ENCODE measurements at regions of chr5 and their contacts with region 1.

Region 1: GRCh38 chr5:64612344-64612961 is 77.8 kb upstream of the SHISAL2B start:
- DNase-seq: peak; percentile 30
- H3K4me3 Mint-ChIP-seq: no peak overlapping the region
- H3K27ac Mint-ChIP-seq: no peak overlapping the region
- H3K4me1 Mint-ChIP-seq: no peaks in the 10 kb centered on the region
- H3K27me3 Mint-ChIP-seq: peaks cover 21% of the 10 kb centered on the region

Region 2: DNA sequence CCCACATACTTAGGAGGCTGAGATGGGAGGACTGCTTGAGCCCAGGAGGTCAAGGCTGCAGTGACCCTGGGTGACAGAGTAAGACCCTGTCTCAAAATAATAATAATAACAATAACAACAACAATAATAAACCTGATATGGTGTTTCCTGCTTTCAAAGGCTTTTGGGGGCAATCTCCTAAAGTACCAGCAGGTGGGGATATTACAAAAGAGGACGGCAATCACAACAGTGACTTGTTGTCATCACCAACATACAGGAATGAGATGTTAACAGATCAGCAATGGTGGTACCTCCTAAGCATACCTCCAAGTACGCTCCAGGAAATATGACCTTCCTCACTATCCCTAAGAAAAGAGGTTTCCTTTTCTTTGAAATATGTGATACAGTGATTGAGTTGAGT is 537.9 kb before region 1 on chr5:
- CTCF ChIA-PET with region 1: interaction called, 4 read pairs
- intact Hi-C with region 1: loop called (anchors 10 kb)
- DNase-seq: peak; percentile 5
- H3K4me3 Mint-ChIP-seq: no peak overlapping the region
- H3K27ac Mint-ChIP-seq: no peak overlapping the region
- H3K4me1 Mint-ChIP-seq: no peaks in the 10 kb centered on the region
- H3K27me3 Mint-ChIP-seq: no peaks in the 10 kb centered on the region

Region 3: DNA sequence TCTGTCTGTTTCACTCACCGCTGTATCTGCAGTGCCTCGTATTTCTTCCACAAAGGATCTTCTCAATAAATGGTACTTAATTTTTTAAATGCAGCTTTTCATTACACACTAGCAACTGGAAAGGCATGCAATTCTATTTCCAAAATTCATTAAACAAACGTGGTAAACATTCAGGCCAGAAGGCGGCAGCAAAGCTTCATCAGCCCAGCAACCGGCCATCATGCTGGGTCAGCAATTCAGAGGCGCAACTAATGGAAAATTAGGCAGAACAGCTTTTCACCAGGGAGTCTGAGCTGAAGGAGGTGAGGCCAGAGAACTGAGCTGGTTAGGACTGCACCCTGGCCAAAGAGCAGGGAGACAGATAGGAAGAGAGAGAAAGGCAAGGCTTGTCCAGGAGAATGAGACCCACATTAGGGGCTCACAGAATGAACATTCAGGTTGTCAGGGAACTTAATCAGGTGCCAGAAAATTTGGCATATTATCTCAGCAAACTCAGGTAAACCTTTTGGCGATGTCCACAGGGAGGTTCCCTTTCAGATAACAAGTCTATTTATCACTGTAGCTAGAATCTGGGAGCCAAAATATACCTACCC is 464.5 kb before region 1 on chr5:
- CTCF ChIA-PET with region 1: interaction called, 4 read pairs
- intact Hi-C with region 1: loop called (anchors 2 kb)
- DNase-seq: peak; percentile 14
- H3K4me3 Mint-ChIP-seq: no peak overlapping the region
- H3K27ac Mint-ChIP-seq: no peak overlapping the region
- H3K4me1 Mint-ChIP-seq: no peaks in the 10 kb centered on the region
- H3K27me3 Mint-ChIP-seq: no peaks in the 10 kb centered on the region

Region 4: DNA sequence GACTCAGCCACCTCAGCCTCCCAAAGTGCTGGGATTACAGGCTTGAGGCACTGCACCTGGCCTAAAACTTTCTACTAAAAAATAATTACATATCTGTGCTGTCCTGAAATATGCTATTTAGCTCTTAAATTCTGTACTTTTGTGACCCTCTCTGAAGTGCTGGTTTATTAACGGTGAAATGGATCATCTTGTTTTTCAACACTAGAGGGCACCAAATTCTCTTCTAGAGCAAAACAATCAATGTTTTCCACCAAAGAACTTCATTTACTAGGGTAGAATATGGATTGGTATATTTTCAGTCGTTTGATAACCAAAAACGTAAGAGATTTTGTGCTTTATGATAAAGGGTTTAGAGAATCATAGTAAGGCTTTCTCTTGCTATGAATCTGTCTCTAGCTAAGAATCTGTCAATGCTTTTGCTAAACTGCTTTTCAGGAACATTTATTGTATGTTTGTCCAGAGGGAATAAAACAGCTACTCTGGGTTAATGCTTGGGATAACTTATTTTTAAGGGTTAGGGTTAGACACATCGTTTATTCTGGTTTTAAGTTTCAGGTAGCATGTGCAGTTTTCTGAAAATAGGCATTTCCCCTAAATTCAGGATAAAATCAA is 383.2 kb before region 1 on chr5:
- CTCF ChIA-PET with region 1: interaction called, 16 read pairs
- intact Hi-C with region 1: loop called (anchors 1 kb)
- DNase-seq: no peak
- H3K4me3 Mint-ChIP-seq: no peak overlapping the region
- H3K27ac Mint-ChIP-seq: no peak overlapping the region
- H3K4me1 Mint-ChIP-seq: no peaks in the 10 kb centered on the region
- H3K27me3 Mint-ChIP-seq: no peaks in the 10 kb centered on the region

Region 5: GRCh38 chr5:64364426-64364825 is 248.0 kb before region 1 on chr5:
- CTCF ChIA-PET with region 1: no interaction called
- intact Hi-C with region 1: no loop called
- DNase-seq: no peak
- H3K4me3 Mint-ChIP-seq: no peak overlapping the region
- H3K27ac Mint-ChIP-seq: no peak overlapping the region
- H3K4me1 Mint-ChIP-seq: no peaks in the 10 kb centered on the region
- H3K27me3 Mint-ChIP-seq: no peaks in the 10 kb centered on the region

Region 6: DNA sequence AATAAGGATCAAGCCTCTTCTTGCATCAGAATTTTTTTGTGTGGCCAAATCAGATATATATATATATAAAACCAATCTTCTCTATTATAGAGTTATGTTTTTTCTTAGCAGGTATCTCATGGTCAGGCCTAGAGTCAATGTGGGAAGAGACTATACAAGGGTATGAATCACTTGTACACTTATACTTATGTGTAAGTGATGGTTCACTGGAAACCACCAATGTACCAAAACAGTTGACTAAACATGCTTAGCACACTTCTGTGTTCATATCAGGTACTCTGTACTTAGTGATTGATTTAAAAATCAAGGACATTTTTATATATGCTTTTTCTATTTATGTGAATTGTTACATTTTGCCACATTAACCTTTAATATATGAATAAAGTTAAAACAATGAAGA is 248.8 kb after region 1 on chr5:
- CTCF ChIA-PET with region 1: no interaction called
- intact Hi-C with region 1: no loop called
- DNase-seq: no peak
- H3K4me3 Mint-ChIP-seq: no peak overlapping the region
- H3K27ac Mint-ChIP-seq: no peak overlapping the region
- H3K4me1 Mint-ChIP-seq: no peaks in the 10 kb centered on the region
- H3K27me3 Mint-ChIP-seq: no peaks in the 10 kb centered on the region